ENCODE measurements at regions of chr1 and their contacts with region 1.

Region 1: DNA sequence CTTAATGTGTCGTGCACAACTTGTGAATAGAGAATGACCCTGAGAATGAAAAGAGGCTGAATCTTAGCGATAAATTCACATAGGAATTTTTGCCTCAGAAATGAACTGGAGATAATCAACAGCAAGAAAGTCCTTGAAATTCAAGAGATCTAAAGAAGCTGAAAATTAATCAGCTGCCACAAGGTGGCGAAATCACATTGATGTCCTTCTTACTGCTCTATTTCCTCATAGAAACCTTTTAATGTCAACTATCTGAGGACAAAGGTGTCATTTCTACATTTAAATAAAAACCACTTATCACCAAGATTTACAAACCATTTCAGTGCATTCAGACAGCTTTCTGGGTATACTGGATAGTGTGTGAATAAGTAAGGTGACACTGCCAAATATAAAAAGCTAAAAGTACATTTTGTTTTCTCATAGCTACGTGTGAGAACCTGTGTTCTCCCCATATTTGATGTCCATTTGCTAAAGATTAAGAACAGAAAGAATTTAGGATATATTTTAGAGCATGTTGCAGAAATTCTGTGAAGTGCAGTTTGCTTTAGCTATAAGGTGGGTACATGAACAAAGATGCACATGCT is 485.3 kb upstream of the PTBP2 start:
- DNase-seq: peak; percentile 42
- H3K4me3 Mint-ChIP-seq: no peak overlapping the region
- H3K27ac Mint-ChIP-seq: no peak overlapping the region
- H3K4me1 Mint-ChIP-seq: peaks cover 16% of the 10 kb centered on the region
- H3K27me3 Mint-ChIP-seq: no peaks in the 10 kb centered on the region
- CTCF ChIP-seq: peak; percentile 46

Region 2: DNA sequence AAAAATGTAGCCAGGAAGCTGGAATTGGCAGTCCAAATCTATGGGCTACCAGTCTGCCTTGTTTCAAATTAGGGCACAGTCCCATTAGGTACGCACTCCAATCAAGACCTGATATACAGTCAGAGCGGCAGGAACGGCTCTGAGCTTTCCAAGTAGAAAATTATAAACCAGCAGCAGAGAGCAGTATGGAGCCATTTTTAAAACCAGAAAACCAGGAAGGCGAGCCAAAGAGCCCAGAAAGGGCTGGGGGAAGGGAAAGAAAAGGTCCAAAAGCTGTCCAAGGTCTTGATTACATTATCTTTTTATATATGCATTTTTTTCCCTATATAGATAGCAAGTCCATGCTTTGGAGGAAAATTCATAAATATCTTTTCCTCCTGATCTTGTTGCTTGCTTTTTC is 283.2 kb before region 1 on chr1:
- CTCF ChIA-PET with region 1: no interaction called
- intact Hi-C with region 1: loop called (anchors 2 kb)
- DNase-seq: peak; percentile 46
- H3K4me3 Mint-ChIP-seq: no peak overlapping the region
- H3K27ac Mint-ChIP-seq: no peak overlapping the region
- H3K4me1 Mint-ChIP-seq: peaks cover 23% of the 10 kb centered on the region
- H3K27me3 Mint-ChIP-seq: no peaks in the 10 kb centered on the region
- CTCF ChIP-seq: no peak

Region 3: GRCh38 chr1:96465441-96465840 is 229.2 kb after region 1 on chr1:
- CTCF ChIA-PET with region 1: no interaction called
- intact Hi-C with region 1: no loop called
- DNase-seq: no peak
- H3K4me3 Mint-ChIP-seq: no peak overlapping the region
- H3K27ac Mint-ChIP-seq: no peak overlapping the region
- H3K4me1 Mint-ChIP-seq: no peaks in the 10 kb centered on the region
- H3K27me3 Mint-ChIP-seq: no peaks in the 10 kb centered on the region
- CTCF ChIP-seq: no peak

Region 4: DNA sequence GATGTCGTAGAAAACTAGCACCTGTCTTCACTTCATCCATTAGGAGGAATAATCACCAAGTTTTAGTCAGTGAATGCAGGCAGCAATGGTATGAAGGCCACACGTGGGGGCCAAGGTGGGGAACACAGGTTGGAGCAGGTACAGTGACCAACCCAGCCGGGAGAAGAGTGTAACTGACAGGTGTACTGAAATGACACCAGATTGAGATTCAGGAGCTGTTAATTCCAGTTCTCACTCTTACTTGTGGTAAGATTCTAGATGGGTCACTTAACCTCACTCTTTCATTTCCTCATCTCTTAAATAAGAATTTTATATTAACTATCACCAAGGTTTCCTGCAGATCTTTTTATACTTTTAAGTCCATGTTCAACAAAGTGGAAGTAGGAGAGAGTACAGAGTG is 279.2 kb after region 1 on chr1:
- CTCF ChIA-PET with region 1: no interaction called
- intact Hi-C with region 1: loop called (anchors 10 kb)
- DNase-seq: no peak
- H3K4me3 Mint-ChIP-seq: no peak overlapping the region
- H3K27ac Mint-ChIP-seq: no peak overlapping the region
- H3K4me1 Mint-ChIP-seq: peaks cover 43% of the 10 kb centered on the region
- H3K27me3 Mint-ChIP-seq: no peaks in the 10 kb centered on the region
- CTCF ChIP-seq: no peak

Region 5: DNA sequence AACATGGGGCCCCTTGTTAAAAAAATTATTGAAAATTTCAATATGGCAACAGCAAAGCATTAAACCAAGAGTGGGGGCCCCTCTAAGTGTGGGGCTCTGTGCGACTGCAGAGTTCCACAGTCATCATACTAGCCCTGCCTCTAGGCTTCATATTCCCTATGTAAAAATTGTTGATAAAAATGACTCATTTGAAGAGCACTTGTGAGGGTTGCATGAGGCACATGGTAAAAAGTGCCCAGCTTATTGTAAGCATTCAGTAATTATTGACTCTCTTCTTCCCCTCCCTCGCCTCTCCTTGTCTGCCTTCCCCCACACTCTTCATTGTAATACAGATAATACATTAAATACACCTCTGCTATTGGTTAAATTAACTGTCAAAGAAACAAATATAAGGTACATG is 398.6 kb after region 1 on chr1:
- CTCF ChIA-PET with region 1: no interaction called
- intact Hi-C with region 1: loop called (anchors 5 kb)
- DNase-seq: no peak
- H3K4me3 Mint-ChIP-seq: no peak overlapping the region
- H3K27ac Mint-ChIP-seq: no peak overlapping the region
- H3K4me1 Mint-ChIP-seq: no peaks in the 10 kb centered on the region
- H3K27me3 Mint-ChIP-seq: no peaks in the 10 kb centered on the region
- CTCF ChIP-seq: no peak